Naive thymus-derived CD4-positive, alpha-beta T cell (primary cell): ENCODE measurements at regions of chr10 and their contacts with region 1.

Region 1: DNA sequence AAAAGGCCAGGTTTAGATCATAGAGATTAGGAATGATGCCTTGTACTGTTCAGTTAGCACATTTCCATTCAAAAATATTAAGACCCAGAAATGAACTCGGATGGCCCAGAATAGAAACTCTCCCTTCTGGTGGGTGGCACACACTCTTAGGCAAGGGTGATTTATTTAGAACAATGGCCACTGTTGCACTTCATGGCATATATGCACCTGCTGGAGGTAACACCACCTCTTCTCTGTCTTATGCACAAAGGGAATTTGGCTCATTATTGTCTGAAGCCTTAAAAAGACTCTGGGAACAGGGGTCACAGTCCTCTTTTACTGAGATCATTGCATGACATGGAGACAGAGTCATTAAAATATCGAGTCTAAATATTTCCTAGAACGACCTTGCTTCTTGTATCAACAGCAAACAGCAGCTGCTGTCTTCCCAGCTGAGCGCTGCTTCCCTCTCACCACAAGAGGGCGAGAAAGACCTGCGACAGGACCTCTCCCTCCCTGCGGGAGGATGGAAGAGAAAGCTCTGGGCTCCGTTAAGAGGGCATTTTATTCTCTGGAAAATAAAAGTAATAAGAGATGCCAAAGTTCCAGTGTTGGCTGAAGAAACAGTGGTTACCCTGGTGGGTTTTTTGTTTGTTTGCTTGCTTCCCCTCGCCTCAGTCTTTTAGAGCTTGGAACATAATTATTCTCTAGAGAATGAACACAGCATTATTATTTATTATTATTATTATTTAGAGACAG is 13.6 kb upstream of the BAMBI start:
- DNase-seq: peak; percentile 33 to 67 (median 58)
- ATAC-seq: peak; percentile 89
- H3K4me3 ChIP-seq: no peak overlapping the region
- H3K4me3 Mint-ChIP-seq: no peak overlapping the region
- H3K27ac ChIP-seq: no peak overlapping the region
- H3K27ac Mint-ChIP-seq: no peak overlapping the region
- H3K4me1 ChIP-seq: peaks cover 0 to 4% of the 10 kb centered on the region in 2 donors
- H3K4me1 Mint-ChIP-seq: peaks cover 5 to 11% (median 7%) of the 10 kb centered on the region in 7 donors
- H3K27me3 ChIP-seq: peaks cover 0 to 8% of the 10 kb centered on the region in 2 donors
- H3K27me3 Mint-ChIP-seq: peaks cover 45 to 50% (median 49%) of the 10 kb centered on the region in 5 donors

Region 2: GRCh38 chr10:28676968-28677887 is 13.5 kb after region 1 on chr10 and contains the start of gene BAMBI:
- CTCF ChIA-PET with region 1: interaction called, 3 read pairs
- POLR2A ChIA-PET with region 1: no interaction called
- intact Hi-C with region 1: loop called (anchors 1 kb)
- DNase-seq: peak; percentile 86 to 95 (median 90)
- ATAC-seq: peak; percentile 97
- H3K4me3 ChIP-seq: peak within 1 kb of the TSS; percentile 57
- H3K4me3 Mint-ChIP-seq: peak within 1 kb of the TSS; percentile 79 to 94 (median 84)
- H3K27ac ChIP-seq: no peak within 1 kb of the TSS
- H3K27ac Mint-ChIP-seq: peak within 1 kb of the TSS in 3 of 9 donors; percentile 24 to 52 (median 43)
- H3K4me1 ChIP-seq: peaks cover 0 to 26% of the 10 kb centered on the region in 2 donors
- H3K4me1 Mint-ChIP-seq: peaks cover 19 to 32% (median 26%) of the 10 kb centered on the region in 7 donors
- H3K27me3 ChIP-seq: peaks cover 11 to 20% of the 10 kb centered on the region in 2 donors
- H3K27me3 Mint-ChIP-seq: peaks cover 63 to 80% (median 70%) of the 10 kb centered on the region in 5 donors
- total RNA-seq, gene BAMBI: 0.12 to 1.6 (median 0.80) TPM in 4 of 5 experiments, not detected in the other

Region 3: DNA sequence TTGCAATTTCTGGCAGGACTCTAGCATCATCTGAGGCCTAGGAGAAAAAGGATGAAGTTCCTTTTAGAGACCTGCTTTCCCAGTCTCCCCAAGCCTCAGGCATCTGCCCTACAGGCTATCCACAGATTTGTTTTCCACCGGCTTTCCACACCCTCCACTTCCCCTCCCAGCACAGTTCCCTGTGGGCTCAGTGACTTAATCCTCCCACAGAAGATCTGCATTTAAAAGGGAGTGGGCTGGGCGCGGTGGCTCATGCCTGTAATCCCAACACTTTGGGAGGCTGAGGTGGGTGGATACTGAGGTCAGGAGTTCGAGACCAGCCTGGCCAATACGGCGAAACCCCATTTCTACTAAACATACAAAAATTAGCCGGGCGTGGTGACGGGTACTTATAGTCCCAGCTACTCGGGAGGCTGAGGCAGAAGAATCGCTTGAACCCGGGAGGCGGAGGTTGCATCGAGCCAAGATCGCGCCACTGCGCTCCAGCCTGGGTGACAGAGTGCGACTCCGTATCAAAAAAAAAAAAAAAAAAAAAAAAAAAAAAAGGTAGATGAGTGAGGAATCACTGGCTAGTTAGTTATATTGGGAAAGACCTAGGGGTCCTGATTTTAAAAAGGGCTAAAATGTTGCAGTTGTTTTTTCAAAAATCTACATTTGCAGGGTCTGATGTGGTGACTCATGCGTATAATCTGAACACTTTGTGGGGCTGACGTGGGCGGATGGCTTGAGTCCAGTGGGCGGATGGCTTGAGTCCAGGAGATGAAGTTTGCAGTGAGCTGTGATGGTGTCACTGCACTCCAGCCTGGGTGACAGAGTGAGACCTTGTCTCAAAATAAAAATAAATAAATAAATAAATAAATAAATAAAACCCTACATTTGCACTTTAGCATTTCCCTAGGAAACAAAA is 133.1 kb after region 1 on chr10:
- CTCF ChIA-PET with region 1: no interaction called
- POLR2A ChIA-PET with region 1: no interaction called
- intact Hi-C with region 1: no loop called
- DNase-seq: no peak
- ATAC-seq: no peak
- H3K4me3 ChIP-seq: no peak overlapping the region
- H3K4me3 Mint-ChIP-seq: no peak overlapping the region
- H3K27ac ChIP-seq: no peak overlapping the region
- H3K27ac Mint-ChIP-seq: no peak overlapping the region
- H3K4me1 ChIP-seq: no peaks in the 10 kb centered on the region
- H3K4me1 Mint-ChIP-seq: no peaks in the 10 kb centered on the region
- H3K27me3 ChIP-seq: no peaks in the 10 kb centered on the region
- H3K27me3 Mint-ChIP-seq: peaks cover 0 to 4% (median 4%) of the 10 kb centered on the region in 5 donors

Region 4: GRCh38 chr10:29304264-29305030 is 640.7 kb after region 1 on chr10:
- CTCF ChIA-PET with region 1: interaction called, 4 read pairs
- POLR2A ChIA-PET with region 1: no interaction called
- intact Hi-C with region 1: loop called in 1 of 2 experiments (anchors 1 kb)
- DNase-seq: peak in 4 of 9 donors; percentile 13 to 22 (median 16)
- ATAC-seq: no peak
- H3K4me3 ChIP-seq: no peak overlapping the region
- H3K4me3 Mint-ChIP-seq: peak overlapping the region in 2 of 10 donors; percentile 14 to 48
- H3K27ac ChIP-seq: no peak overlapping the region
- H3K27ac Mint-ChIP-seq: no peak overlapping the region
- H3K4me1 ChIP-seq: no peaks in the 10 kb centered on the region
- H3K4me1 Mint-ChIP-seq: peaks cover 0 to 5% (median 3%) of the 10 kb centered on the region in 7 donors
- H3K27me3 ChIP-seq: no peaks in the 10 kb centered on the region
- H3K27me3 Mint-ChIP-seq: peaks cover 11 to 45% (median 37%) of the 10 kb centered on the region in 5 donors

Region 5: GRCh38 chr10:29443745-29444523 is 780.2 kb after region 1 on chr10:
- CTCF ChIA-PET with region 1: no interaction called
- POLR2A ChIA-PET with region 1: no interaction called
- intact Hi-C with region 1: loop called (anchors 1 to 2 kb)
- DNase-seq: no peak
- ATAC-seq: no peak
- H3K4me3 ChIP-seq: no peak overlapping the region
- H3K4me3 Mint-ChIP-seq: no peak overlapping the region
- H3K27ac ChIP-seq: no peak overlapping the region
- H3K27ac Mint-ChIP-seq: no peak overlapping the region
- H3K4me1 ChIP-seq: no peaks in the 10 kb centered on the region
- H3K4me1 Mint-ChIP-seq: peaks cover 0 to 14% (median 4%) of the 10 kb centered on the region in 7 donors
- H3K27me3 ChIP-seq: no peaks in the 10 kb centered on the region
- H3K27me3 Mint-ChIP-seq: no peaks in the 10 kb centered on the region